ENCODE measurements at regions of chr10 and their contacts with region 1.

Region 1: GRCh38 chr10:92432596-92432995 is 141.3 kb downstream of the IDE start:
- DNase-seq: no peak
- H3K4me3 ChIP-seq: no peak overlapping the region
- H3K27ac ChIP-seq: no peak overlapping the region
- H3K27me3 ChIP-seq: no peaks in the 10 kb centered on the region
- CTCF ChIP-seq: no peak

Region 2: GRCh38 chr10:91957091-91957490 is 475.5 kb before region 1 on chr10:
- CTCF ChIA-PET with region 1: interaction called, 10 read pairs
- POLR2A ChIA-PET with region 1: no interaction called
- DNase-seq: no peak
- H3K4me3 ChIP-seq: no peak overlapping the region
- H3K27ac ChIP-seq: no peak overlapping the region
- H3K27me3 ChIP-seq: no peaks in the 10 kb centered on the region
- CTCF ChIP-seq: no peak

Region 3: DNA sequence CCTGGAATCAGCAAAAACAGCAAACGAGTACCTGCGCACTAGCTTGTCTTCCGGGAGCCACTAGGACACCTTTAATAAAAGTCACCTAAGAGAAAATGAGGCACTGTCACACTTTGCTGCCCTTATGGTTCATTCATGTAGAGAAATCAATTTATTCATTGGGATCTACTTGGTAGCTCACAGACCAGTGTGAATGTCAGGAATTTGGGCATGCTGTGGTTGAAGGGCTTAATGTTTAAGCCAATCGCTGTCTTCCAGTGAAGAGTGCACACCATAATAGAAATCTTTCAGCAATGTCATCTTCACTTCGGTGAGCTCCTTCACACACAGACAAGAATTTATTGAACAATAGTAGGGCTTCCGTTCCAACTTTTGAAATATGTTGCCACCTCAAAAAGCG is 76.6 kb before region 1 on chr10:
- CTCF ChIA-PET with region 1: no interaction called
- POLR2A ChIA-PET with region 1: no interaction called
- DNase-seq: no peak
- H3K4me3 ChIP-seq: no peak overlapping the region
- H3K27ac ChIP-seq: no peak overlapping the region
- H3K27me3 ChIP-seq: peaks cover 2% of the 10 kb centered on the region
- CTCF ChIP-seq: no peak

Region 4: DNA sequence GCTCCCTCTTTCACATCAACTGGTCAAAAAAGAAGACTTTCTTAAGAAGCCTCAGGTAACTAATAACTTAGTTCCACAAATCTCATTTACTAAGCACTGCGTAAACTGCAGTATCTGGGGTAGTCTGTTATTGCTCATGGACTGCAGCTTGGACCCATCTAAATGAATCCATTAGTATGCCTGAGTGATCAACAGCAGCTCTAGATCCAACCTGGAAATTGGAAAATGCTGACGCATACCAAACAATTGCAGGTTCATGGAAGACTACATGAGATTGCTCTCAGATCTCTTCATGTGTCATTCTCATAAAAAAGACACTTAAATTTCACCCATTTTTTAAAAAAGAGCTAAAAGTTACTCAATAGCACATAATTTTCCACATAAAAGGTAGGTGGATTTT is 19.7 kb after region 1 on chr10:
- CTCF ChIA-PET with region 1: interaction called, 12 read pairs
- POLR2A ChIA-PET with region 1: no interaction called
- DNase-seq: no peak
- H3K4me3 ChIP-seq: no peak overlapping the region
- H3K27ac ChIP-seq: no peak overlapping the region
- H3K27me3 ChIP-seq: no peaks in the 10 kb centered on the region
- CTCF ChIP-seq: no peak